Panc1 (cell line): ENCODE measurements at regions of chr4 and their contacts with region 1.

Region 1: GRCh38 chr4:127304356-127304755 is 328.4 kb upstream of the INTU start:
- DNase-seq: no peak
- ATAC-seq: no peak
- H3K4me3 ChIP-seq: no peak overlapping the region
- H3K27ac ChIP-seq: no peak overlapping the region
- H3K4me1 ChIP-seq: no peaks in the 10 kb centered on the region
- H3K27me3 ChIP-seq: no peaks in the 10 kb centered on the region
- CTCF ChIP-seq: no peak

Region 2: DNA sequence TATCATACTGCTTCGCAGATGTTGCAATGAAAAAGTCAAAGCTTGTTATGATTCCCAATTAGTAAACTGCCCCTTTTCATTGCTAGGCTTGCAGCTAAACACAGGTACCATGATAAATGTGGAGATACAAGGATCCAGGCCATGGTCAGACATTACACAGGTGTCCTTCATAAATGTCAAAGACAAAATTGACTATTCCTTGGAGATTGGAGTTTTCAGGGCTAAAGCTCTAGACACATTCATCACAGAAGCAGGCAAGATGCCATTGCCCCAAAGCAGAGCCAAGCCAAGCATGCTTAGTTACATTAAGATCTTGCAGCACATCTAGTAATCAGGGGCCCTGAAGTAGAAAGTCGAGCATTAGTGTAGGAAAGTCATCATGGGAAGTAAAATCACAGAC is 217.1 kb after region 1 on chr4:
- CTCF ChIA-PET with region 1: no interaction called
- POLR2A ChIA-PET with region 1: interaction called, 20 read pairs
- in situ Hi-C with region 1: no loop called
- intact Hi-C with region 1: no loop called
- DNase-seq: no peak
- ATAC-seq: no peak
- H3K4me3 ChIP-seq: no peak overlapping the region
- H3K27ac ChIP-seq: no peak overlapping the region
- H3K4me1 ChIP-seq: no peaks in the 10 kb centered on the region
- H3K27me3 ChIP-seq: no peaks in the 10 kb centered on the region; the same call in 1 of the 2 replicates
- CTCF ChIP-seq: no peak